Heart left ventricle (tissue), 16 donors: ENCODE measurements at regions of chr1 and their contacts with region 1.

Region 1: DNA sequence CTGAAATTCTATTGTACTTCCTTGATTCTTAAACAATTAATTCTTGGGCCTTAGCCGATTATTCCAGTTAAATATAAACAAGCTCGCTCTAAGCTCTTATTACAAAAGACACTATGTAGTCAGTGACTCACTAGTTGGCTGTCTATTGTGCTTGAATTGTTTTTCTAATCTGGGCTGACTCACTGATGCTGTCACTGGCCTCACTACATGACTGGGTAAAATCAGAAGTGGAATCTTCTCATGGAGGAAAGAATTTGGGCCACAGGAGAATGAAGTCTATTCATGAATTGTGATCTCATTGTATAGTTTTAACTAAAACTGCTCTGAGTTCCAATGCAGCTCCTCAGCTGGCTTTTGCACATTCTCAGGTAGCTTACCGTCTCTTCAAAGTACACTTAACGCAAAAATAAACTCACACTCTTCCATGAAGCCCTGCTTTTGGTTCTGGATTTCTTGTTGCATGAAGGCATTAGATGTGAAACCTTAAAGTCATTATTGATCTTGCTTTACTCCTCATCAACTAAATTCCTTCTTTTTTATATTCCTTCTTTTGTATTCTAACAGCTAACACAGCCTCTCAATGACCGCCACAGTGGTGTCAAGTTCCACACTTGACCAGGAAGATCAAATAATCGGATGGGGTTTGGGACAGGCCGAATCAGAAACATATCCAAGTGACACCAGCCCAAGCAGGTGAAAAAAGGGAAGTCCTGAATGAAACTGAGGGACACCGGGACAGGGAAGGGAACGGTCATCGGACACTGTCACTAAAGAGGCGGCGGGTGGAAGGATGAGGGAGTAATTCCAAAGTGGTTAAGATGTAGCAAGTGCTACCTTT is 80.9 kb upstream of the LBR start:
- DNase-seq: peak in 4 of 5 donors; percentile 33 to 50 (median 40)
- ATAC-seq: peak; percentile 99
- H3K4me3 ChIP-seq: no peak overlapping the region
- H3K27ac ChIP-seq: peak overlapping the region; percentile 1 to 86 (median 77)
- H3K4me1 ChIP-seq: peaks cover 0 to 26% (median 14%) of the 10 kb centered on the region in 12 donors
- H3K27me3 ChIP-seq: no peaks in the 10 kb centered on the region
- CTCF ChIP-seq: no peak
- POLR2A ChIP-seq: no peak

Region 2: GRCh38 chr1:225554216-225554812 is 45.6 kb after region 1 on chr1:
- intact Hi-C with region 1: loop called in 1 of 10 experiments (anchors 10 kb)
- DNase-seq: no peak
- ATAC-seq: peak in 1 of 4 donors; percentile 43
- H3K4me3 ChIP-seq: no peak overlapping the region
- H3K27ac ChIP-seq: no peak overlapping the region
- H3K4me1 ChIP-seq: peaks cover 0 to 24% (median 5%) of the 10 kb centered on the region in 12 donors
- H3K27me3 ChIP-seq: no peaks in the 10 kb centered on the region
- CTCF ChIP-seq: peak; percentile 39 to 73 (median 60)
- POLR2A ChIP-seq: no peak